SK-N-SH (cell line): ENCODE measurements at regions of chr14 and their contacts with region 1.

Region 1: DNA sequence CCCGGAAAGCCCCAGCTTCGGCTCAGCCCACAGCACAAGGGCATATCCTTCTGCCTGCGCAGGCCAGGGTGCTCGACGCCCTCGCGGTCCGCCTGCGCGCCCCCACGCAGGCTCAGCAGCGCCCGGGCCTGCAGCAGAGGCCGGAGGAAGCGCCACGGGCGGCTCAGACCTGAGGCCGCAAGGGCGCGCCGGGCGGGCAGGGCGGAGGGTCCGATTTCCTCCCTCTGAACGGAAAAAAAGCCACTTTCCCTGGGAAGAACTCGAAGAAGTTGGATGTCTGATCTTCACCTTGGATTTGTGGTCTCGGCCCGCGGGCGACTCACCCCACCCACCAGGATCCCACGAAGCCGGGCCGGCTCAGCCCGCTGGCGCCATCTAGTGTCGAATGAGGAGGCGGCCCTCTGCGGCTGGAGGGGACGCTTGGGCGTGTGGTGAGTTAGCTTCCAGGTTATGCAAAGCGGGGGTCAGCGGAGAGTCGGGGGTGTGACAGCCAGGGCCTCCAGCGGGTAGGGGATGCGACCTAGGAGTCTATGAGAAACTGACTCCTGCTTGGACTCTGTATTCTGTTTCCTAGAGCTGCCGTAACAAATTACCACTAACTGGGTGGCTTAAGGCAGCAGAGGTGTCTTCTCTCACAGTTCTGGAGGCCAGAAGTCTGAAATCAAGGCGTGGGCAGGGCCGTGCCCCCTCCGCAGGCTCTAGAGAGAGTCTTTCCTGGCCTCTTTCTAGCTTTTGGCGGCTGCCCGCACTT is 40.0 kb upstream of the SRSF5 start:
- DNase-seq: peak; percentile 95
- H3K4me3 ChIP-seq: peak overlapping the region; percentile 32 to 59
- H3K27ac ChIP-seq: no peak overlapping the region
- H3K4me1 ChIP-seq: peaks cover 0 to 6% of the 10 kb centered on the region in 2 experiments; a peak in 1 of 4 replicates
- H3K27me3 ChIP-seq: no peaks in the 10 kb centered on the region
- CTCF ChIP-seq: peak; percentile 98
- EP300 ChIP-seq: no peak
- RAD21 ChIP-seq: peak; percentile 97

Region 2: GRCh38 chr14:69574263-69574953 is 152.5 kb before region 1 on chr14 and contains the start of gene CCDC177:
- CTCF ChIA-PET with region 1: interaction called, 73 read pairs
- POLR2A ChIA-PET with region 1: no interaction called
- DNase-seq: peak; percentile 88
- H3K4me3 ChIP-seq: peak within 1 kb of the TSS; percentile 43 to 58
- H3K27ac ChIP-seq: no peak within 1 kb of the TSS
- H3K4me1 ChIP-seq: peaks cover 0 to 2% of the 10 kb centered on the region in 2 experiments; a peak in 1 of 4 replicates
- H3K27me3 ChIP-seq: peaks cover 16% of the 10 kb centered on the region; the same call in 1 of the 2 replicates
- CTCF ChIP-seq: peak; percentile 94
- EP300 ChIP-seq: no peak
- RAD21 ChIP-seq: peak; percentile 78
- polyA plus RNA-seq, gene CCDC177: not detected in 2 replicates

Region 3: GRCh38 chr14:69593018-69593677 is 133.8 kb before region 1 on chr14:
- CTCF ChIA-PET with region 1: interaction called, 107 read pairs
- POLR2A ChIA-PET with region 1: no interaction called
- DNase-seq: no peak
- H3K4me3 ChIP-seq: no peak overlapping the region
- H3K27ac ChIP-seq: no peak overlapping the region
- H3K4me1 ChIP-seq: peaks cover 0 to 3% of the 10 kb centered on the region in 2 experiments; a peak in 2 of 4 replicates
- H3K27me3 ChIP-seq: no peaks in the 10 kb centered on the region
- CTCF ChIP-seq: no peak
- EP300 ChIP-seq: no peak
- RAD21 ChIP-seq: no peak

Region 4: DNA sequence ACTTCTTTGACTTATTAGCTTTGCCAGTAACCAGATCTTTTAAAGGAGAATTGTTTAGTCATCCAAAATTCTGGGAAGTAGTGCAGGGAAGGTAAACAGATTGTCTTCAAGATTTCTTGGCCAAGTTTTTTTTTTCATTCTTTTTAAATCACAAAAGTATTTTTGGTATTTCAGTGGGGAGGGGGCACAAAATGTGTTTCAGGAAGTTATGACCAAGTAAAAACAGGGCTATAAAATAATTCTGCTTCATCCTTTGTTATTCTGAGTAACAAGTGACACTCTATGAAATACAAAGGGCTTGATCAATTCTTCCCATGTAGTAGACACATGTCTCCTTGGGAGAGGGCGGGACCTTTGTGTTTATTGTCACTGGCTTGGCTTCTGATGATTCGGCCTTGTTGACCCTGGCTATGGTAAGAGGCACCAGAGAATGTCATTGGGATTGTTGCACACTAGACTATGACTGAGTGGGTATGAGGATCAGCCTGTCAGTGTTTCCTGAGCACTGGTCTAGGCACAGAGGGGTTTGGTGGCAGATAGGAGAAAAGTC is 60.2 kb before region 1 on chr14:
- CTCF ChIA-PET with region 1: interaction called, 10 read pairs
- POLR2A ChIA-PET with region 1: no interaction called
- DNase-seq: no peak
- H3K4me3 ChIP-seq: no peak overlapping the region
- H3K27ac ChIP-seq: peak overlapping the region; percentile 38 to 47; a peak in 3 of 4 replicates
- H3K4me1 ChIP-seq: peaks cover 12 to 26% of the 10 kb centered on the region in 2 experiments
- H3K27me3 ChIP-seq: no peaks in the 10 kb centered on the region
- CTCF ChIP-seq: no peak
- EP300 ChIP-seq: peak in 1 of 2 experiments; percentile 46; a peak in 1 of 4 replicates
- RAD21 ChIP-seq: no peak

Region 5: GRCh38 chr14:69708586-69709174 is 18.3 kb before region 1 on chr14:
- CTCF ChIA-PET with region 1: interaction called, 19 read pairs
- POLR2A ChIA-PET with region 1: no interaction called
- DNase-seq: peak; percentile 51
- H3K4me3 ChIP-seq: no peak overlapping the region; a peak in 1 of 4 replicates
- H3K27ac ChIP-seq: peak overlapping the region in 1 of 2 experiments; percentile 14; a peak in 1 of 4 replicates
- H3K4me1 ChIP-seq: peaks cover 13 to 32% of the 10 kb centered on the region in 2 experiments; a peak in 2 of 4 replicates
- H3K27me3 ChIP-seq: no peaks in the 10 kb centered on the region
- CTCF ChIP-seq: peak; percentile 28; the same call in 1 of the 2 replicates
- EP300 ChIP-seq: no peak
- RAD21 ChIP-seq: peak; percentile 54

Region 6: GRCh38 chr14:69741055-69741454 is 14.1 kb after region 1 on chr14:
- CTCF ChIA-PET with region 1: interaction called, 19 read pairs
- POLR2A ChIA-PET with region 1: no interaction called
- DNase-seq: no peak
- H3K4me3 ChIP-seq: no peak overlapping the region
- H3K27ac ChIP-seq: no peak overlapping the region
- H3K4me1 ChIP-seq: no peaks in the 10 kb centered on the region
- H3K27me3 ChIP-seq: no peaks in the 10 kb centered on the region
- CTCF ChIP-seq: no peak
- EP300 ChIP-seq: no peak
- RAD21 ChIP-seq: no peak